HEK293 (cell line): ENCODE measurements at regions of chr6 and their contacts with region 1.

Region 1: DNA sequence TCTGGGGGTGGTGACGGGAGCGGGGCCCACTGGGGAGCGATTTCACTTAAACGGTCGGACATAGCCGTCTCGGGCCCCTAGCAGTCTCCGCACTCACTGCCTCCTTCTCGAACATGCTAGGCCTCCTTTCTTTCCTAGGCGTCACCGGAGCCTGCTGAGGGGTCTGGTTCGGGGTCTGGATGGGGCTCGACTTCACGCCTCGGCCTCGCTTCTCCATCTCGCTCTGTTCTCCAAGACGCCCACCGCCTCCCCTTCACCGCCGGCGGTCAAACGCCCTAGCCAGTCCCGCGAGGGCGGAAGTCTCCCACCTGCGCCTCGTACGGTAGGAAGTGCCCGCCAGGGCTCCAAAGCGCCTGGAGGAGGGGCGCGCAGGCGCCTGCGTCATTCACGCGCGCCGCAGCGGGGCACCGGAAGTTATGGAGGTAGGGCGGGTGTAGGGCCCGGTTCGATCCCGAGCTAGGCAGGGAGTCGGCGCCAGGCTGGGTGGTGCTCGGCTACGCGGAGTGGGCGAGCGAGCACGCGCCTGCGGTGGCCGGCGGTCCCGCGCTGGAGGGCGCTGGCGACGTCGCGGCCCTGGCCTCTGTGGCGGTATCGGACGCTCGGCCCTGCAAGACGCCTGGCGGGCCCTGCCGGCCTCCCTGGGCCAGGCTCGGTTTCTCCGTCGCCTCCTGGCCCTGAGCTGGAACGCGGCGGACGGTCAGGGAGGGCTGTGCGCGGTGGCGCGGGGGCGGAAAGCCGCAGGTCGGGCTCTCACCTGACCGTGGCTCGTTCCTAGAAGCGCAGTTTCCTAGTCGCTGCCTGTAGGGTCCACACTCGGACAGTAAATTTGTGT is at the starts of genes DYNLT2 and ERMARD:
- H3K4me3 ChIP-seq: peak within 1 kb of the TSS; percentile 75
- H3K27ac ChIP-seq: peak within 1 kb of the TSS; percentile 92
- H3K4me1 ChIP-seq: peaks cover 12% of the 10 kb centered on the region; the same call in 1 of the 2 replicates
- CTCF ChIP-seq: peak; percentile 65

Region 2: DNA sequence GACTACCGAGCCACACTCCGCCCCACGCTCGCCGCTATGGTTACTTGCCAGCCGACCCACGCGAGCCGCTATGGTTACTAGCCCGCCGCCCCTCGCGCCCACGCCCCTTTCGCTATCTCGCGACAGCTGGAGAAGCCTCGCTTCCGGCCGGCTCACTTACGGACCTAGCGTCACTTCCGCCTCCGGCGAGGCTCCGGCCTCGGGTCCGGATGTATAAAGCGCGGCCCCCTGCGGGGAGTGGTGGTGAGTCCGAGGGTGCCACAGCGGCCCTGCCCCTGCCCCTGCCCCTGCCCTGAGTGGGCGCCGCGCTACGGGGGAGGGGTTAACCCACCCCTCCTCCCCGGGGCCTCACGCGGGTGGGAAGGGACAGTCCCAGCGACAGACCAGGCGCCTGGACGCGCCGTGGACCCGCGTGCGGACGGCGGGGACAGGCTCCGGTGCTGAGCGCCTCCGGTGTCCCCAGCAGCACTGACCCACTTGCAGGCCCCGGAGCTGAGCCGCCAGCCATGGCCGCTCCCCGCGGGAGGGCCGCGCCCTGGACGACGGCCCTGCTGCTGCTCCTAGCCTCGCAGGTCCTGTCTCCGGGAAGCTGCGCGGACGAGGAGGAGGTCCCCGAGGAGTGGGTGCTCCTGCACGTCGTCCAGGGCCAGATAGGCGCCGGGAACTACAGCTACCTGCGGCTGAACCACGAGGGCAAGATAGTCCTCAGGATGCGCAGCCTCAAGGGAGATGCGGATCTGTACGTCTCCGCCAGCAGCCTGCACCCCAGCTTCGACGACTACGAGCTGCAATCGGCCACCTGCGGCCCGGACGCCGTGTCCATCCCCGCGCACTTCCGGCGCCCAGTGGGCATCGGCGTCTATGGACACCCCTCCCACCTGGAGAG is 49.3 kb before region 1 on chr6 and contains the starts of genes C6orf120 and WDR27:
- CTCF ChIA-PET with region 1: no interaction called
- POLR2A ChIA-PET with region 1: interaction called, 21 read pairs
- H3K4me3 ChIP-seq: peak within 1 kb of the TSS; percentile 97
- H3K27ac ChIP-seq: peak within 1 kb of the TSS; percentile 86
- H3K4me1 ChIP-seq: peaks cover 9% of the 10 kb centered on the region; the same call in 1 of the 2 replicates
- CTCF ChIP-seq: no peak

Region 3: GRCh38 chr6:169723200-169723909 is 28.1 kb before region 1 on chr6:
- CTCF ChIA-PET with region 1: no interaction called
- POLR2A ChIA-PET with region 1: interaction called, 21 read pairs
- H3K4me3 ChIP-seq: peak overlapping the region; percentile 89
- H3K27ac ChIP-seq: peak overlapping the region; percentile 90
- H3K4me1 ChIP-seq: 0 out of 2 replicates have a peak, but pooled peaks cover 4% of the 10 kb centered on the region
- CTCF ChIP-seq: no peak

Region 4: DNA sequence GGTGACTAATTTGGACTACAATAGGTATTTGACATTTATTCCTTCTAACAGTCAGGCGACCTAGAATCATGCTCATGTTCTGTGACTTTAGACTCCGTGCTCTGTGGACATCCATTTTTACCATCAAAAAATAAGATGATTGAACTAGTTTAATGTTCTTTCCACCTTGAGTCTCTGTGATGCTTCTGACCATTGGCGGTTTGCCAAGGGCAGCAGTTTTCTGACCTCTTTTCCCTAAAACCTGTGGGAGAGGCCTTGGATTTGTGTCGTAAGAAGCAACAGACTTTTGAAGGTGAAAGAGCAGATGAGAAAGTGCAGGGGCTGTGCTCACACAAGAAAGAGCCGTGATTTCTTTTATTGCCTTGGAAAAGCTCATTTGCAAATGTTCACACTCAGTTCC is 17.4 kb after region 1 on chr6:
- CTCF ChIA-PET with region 1: interaction called, 3 read pairs
- POLR2A ChIA-PET with region 1: interaction called, 10 read pairs
- H3K4me3 ChIP-seq: no peak overlapping the region
- H3K27ac ChIP-seq: no peak overlapping the region
- H3K4me1 ChIP-seq: no peaks in the 10 kb centered on the region
- CTCF ChIP-seq: no peak

Region 5: DNA sequence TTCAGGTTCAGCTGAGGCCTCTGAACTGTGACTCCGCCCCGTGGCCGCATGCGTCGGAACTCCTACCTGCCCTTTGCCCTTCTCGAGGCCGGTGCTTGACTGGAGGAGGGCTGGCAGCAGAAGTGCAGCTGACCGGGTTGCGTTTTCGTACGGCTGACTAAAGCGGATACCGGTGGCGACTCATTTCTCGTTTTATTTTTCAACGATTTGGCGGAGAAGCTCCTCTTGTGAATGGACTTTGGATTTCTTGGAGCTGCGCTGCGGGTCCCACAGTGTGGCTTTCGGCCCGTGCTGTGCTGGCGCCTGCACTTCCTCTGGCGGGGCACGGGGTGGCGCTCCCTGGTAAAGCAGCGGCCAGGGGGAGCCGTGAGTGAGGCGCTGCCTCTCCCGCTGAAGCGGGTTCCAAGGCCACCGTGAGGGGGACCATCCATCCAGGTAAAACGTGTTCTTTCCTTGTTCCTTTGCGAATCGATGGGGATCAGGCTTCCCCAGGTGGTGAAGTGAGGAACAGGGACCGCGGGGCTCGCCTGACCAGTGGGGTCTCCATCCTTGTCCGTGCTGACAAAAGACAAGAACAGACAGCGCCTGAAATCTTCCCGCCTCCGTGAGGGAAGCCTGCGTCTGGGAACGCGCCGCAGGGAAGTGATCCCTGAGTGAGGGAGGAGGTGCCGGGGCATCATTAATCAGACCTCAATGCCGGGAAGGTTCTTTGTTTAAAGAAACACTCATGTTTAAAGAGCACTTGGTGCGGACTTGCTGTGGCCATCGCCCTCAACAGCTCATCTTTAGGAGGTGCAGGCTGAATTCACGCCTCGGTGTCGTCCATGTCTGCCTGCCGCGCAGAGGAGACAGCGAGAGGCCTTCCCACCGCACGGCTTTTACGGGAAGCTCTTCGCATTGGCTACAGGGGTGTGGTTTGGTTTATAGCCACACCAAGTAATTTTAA is 38.8 kb after region 1 on chr6:
- CTCF ChIA-PET with region 1: interaction called, 11 read pairs
- POLR2A ChIA-PET with region 1: interaction called, 6 read pairs
- H3K4me3 ChIP-seq: peak overlapping the region; percentile 43
- H3K27ac ChIP-seq: no peak overlapping the region; the same call in 1 of the 2 replicates
- H3K4me1 ChIP-seq: 0 out of 2 replicates have a peak, but pooled peaks cover 5% of the 10 kb centered on the region
- CTCF ChIP-seq: peak; percentile 98

Region 6: DNA sequence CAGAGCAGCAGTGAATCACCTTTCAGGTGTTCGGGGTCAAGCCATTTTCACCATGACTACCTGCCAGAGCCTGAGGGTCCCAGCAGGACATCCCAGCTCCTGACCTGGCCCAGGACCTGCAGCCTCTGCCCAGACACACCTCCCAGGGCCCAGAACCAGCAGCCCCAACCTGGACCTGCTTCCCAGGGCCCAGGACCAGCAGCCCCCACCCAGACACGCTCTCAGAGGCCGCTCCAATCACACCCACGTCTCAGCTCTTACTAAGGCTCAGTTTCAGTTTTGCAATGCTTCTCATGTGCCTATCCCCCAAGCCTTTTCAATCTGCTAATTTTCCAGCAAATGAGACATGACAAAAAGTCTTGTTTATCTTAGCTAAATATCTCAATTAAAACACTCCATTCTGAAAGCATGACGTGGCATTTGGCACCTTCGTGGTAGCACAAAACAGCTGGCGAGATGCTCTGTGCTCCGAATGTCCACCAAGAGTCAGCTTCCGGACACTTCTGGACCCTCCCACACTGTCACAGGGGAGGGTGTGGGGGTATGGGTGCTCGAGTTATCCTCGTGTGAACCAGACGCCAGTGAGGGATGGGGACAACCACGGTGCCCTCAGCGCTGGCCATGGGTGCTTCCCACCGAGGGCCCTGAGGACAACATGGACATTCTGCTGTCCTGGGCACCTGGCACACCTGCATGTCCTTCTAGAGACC is 286.2 kb after region 1 on chr6:
- CTCF ChIA-PET with region 1: no interaction called
- POLR2A ChIA-PET with region 1: no interaction called
- H3K4me3 ChIP-seq: no peak overlapping the region
- H3K27ac ChIP-seq: no peak overlapping the region
- H3K4me1 ChIP-seq: no peaks in the 10 kb centered on the region
- CTCF ChIP-seq: no peak

Region 7: DNA sequence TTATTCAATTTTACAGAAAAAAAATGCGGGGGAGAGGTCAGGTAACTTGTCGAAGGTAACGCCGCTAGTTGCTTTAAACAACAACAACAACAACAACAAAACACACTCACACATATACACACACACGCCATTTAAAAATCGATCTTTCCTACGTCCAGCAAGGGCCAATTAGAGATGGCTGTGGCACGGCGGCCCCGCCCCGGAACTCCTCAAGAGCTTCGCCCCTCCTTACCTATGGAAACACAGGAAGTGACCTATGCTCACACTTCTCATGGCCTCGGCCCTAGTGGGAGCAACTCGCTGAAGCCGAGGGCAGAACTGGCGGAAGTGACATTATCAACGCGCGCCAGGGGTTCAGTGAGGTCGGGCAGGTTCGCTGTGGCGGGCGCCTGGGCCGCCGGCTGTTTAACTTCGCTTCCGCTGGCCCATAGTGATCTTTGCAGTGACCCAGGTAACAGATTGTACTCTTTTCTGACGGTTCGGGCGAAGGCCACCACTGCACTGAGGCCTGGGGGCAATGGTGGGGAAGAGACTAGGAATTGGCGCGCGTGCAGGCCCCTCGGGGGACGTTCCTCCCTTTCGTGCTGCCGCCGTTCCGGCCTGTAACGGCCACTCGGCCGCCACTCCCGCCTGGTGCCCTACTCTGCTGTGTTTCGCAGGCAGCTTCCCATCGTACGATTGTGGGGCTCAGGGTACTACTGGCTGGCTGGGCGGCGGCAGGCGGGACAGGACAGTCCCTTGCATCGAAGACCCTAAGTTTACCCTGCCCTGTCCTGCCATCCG is 802.7 kb after region 1 on chr6 and contains the start of gene TBP:
- CTCF ChIA-PET with region 1: no interaction called
- POLR2A ChIA-PET with region 1: interaction called, 12 read pairs
- H3K4me3 ChIP-seq: peak within 1 kb of the TSS; percentile 98
- H3K27ac ChIP-seq: peak within 1 kb of the TSS; percentile 66
- H3K4me1 ChIP-seq: peaks cover 9% of the 10 kb centered on the region
- CTCF ChIP-seq: no peak